ENCODE measurements at regions of chr21 and their contacts with region 1.

Region 1: GRCh38 chr21:45302078-45303055 is 14.7 kb upstream of the POFUT2 start:
- DNase-seq: peak; percentile 55 to 93 (median 69)
- ATAC-seq: peak; percentile 80
- H3K4me3 ChIP-seq: no peak overlapping the region
- H3K4me3 Mint-ChIP-seq: peak overlapping the region; percentile 48
- H3K27ac ChIP-seq: peak overlapping the region; percentile 73
- H3K27ac Mint-ChIP-seq: peak overlapping the region; percentile 94
- H3K4me1 ChIP-seq: peaks cover 60% of the 10 kb centered on the region
- H3K4me1 Mint-ChIP-seq: peaks cover 22% of the 10 kb centered on the region
- H3K27me3 ChIP-seq: no peaks in the 10 kb centered on the region
- H3K27me3 Mint-ChIP-seq: no peaks in the 10 kb centered on the region
- CTCF ChIP-seq: no peak

Region 2: DNA sequence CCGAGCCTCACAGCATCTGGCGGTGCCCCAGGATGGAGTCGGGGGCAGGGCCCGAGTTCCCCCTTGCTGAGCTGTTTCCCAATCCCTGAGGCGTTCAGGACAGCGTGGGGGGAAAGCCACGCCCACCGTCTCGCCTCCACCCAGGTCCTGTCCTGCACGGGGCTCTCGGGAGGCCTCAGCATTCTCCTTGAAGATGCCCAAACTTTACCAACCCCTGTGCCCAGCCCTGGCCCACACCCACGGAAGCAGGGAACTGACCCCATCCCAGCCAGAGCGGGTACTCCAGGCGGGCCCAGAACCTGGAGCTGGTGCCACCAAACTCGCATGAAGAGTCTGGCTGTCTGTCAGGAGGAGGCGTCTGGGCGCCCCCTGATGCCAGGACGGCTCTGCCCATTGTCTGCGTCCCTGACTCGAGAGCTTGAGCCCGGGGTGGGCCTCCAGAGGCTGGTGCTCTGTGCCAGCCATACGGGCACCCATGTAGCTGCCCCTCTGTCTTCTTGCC is 20.6 kb after region 1 on chr21:
- CTCF ChIA-PET with region 1: no interaction called
- POLR2A ChIA-PET with region 1: interaction called, 16 read pairs
- intact Hi-C with region 1: loop called in 1 of 2 experiments (anchors 1 kb)
- DNase-seq: no peak
- ATAC-seq: no peak
- H3K4me3 ChIP-seq: no peak overlapping the region
- H3K4me3 Mint-ChIP-seq: peak overlapping the region; percentile 68
- H3K27ac ChIP-seq: peak overlapping the region in 1 of 2 donors; percentile 29
- H3K27ac Mint-ChIP-seq: peak overlapping the region; percentile 94
- H3K4me1 ChIP-seq: peaks cover 51% of the 10 kb centered on the region
- H3K4me1 Mint-ChIP-seq: peaks cover 19% of the 10 kb centered on the region
- H3K27me3 ChIP-seq: no peaks in the 10 kb centered on the region
- H3K27me3 Mint-ChIP-seq: no peaks in the 10 kb centered on the region
- CTCF ChIP-seq: no peak

Measured in CD4-positive, alpha-beta T cell (primary cell).